Naive thymus-derived CD8-positive, alpha-beta T cell (primary cell): ENCODE measurements at regions of chr19 and their contacts with region 1.

Region 1: DNA sequence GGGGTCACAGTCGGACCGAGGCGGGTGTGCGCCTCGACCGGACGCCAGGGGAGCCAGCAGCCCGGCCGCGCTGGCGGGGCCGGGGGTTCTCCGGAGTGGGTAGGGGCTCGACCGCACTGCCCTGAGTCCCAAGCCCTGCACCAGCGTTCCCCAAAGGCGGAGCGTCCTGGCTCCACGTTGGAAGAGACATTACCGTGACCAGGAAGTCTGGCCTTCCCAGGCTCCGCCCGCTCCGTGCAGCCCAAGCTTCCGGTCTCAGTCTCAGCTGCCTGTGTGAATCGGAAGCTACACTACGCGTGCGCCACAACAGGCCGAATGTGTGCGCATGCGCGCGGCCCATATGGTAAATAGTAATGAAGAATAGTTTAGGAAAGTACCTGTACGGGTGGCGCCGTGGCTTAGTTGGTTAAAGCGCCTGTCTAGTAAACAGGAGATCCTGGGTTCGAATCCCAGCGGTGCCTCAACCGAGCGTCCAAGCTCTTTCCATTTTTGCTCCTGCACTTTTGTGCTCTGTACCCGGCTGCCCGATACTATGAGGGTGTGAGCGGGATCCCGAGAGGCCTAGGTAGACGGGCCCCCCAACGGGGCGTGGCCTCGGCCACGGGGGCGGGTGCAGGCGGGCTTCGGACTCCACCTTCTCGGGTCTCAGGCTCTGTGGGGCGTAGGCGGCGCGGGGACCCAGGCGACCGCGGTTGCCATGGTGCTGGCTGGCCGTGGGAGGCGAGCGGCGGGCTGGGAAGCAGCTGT is 17.3 kb upstream of the LRP3 start:
- DNase-seq: peak; percentile 83 to 99 (median 96)
- ATAC-seq: peak; percentile 73 to 79
- H3K4me3 Mint-ChIP-seq: peak overlapping the region; percentile 92 to 100 (median 98)
- H3K27ac Mint-ChIP-seq: peak overlapping the region; percentile 97 to 100 (median 99)
- H3K4me1 Mint-ChIP-seq: peaks cover 24 to 55% (median 53%) of the 10 kb centered on the region in 4 donors
- H3K27me3 Mint-ChIP-seq: peaks cover 0 to 4% (median 0%) of the 10 kb centered on the region in 5 donors

Region 2: DNA sequence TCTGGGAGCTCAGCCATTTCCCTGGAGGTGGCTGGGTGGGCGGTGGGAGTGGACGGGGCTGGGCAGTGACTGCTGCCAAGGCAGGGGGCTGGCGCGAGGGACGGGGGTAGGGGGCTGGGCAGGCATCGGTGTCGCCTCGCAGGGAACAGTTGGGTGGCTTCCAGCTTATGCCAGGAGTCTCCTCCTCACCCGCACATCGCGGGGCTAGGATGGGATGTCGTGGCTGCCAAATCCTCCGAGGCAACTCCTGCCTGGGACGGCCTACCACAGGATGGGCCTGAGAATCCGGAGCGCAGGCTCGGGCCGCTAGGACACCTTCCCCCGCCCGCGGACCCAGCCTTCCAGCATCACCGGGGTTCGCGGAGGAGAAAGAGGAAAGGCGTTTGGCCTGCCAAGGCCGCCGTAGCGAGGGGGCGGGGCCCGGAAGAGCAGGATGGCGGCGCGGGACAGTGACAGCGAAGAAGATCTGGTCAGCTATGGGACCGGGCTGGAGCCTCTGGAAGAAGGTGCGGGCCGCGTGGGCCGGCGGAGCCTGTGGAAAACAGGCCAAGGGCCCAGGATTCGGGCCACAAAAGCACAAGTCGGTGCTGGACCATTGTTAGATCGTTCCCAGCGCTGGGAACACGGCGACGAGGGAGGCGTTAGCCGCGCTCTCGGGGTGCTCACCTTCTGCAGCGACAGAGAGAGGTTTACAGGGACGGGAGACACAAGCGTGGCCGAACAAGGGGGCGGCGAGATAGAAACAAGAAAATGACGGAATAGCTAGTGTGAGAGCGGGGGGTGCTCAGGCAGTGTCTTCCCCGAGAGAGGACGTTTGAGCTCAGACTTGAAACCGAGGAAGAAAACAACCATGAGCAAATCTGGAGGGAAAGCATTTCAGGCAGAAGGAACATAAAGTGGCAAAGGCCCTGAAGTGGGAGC is 95.8 kb before region 1 on chr19 and contains the start of gene GPATCH1:
- POLR2A ChIA-PET with region 1: interaction called, 10 read pairs
- DNase-seq: peak; percentile 70 to 92 (median 82)
- ATAC-seq: peak; percentile 95 to 97
- H3K4me3 Mint-ChIP-seq: peak within 1 kb of the TSS; percentile 93 to 100 (median 99)
- H3K27ac Mint-ChIP-seq: peak within 1 kb of the TSS; percentile 91 to 99 (median 97)
- H3K4me1 Mint-ChIP-seq: peaks cover 13 to 34% (median 21%) of the 10 kb centered on the region in 4 donors
- H3K27me3 Mint-ChIP-seq: no peaks in the 10 kb centered on the region
- polyA plus RNA-seq, gene GPATCH1: 3.9 to 6.4 (median 5.0) TPM

Region 3: DNA sequence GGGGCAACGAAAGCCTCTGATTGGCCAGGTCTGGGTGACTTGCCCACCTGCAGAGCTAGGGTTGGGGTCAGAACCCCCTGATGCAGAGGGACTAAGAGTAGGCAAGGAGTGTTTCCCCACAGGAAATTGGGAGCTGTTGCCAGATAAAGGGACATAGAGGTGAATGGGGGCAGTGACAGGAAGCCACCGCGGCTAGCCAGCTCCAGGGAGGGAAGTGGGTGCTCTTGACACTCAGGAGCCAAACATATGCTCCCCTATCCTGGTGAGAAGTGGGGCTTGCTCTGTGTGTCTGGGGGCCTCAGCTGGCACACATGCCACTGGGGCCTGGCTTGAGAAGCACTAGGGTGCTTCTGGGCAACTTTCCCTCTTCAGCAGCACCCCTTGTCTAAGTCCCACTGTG is 18.9 kb before region 1 on chr19:
- POLR2A ChIA-PET with region 1: interaction called, 113 read pairs
- DNase-seq: no peak
- ATAC-seq: no peak
- H3K4me3 Mint-ChIP-seq: peak overlapping the region in 1 of 10 donors; percentile 22
- H3K27ac Mint-ChIP-seq: peak overlapping the region in 7 of 10 donors; percentile 28 to 92 (median 69)
- H3K4me1 Mint-ChIP-seq: peaks cover 18 to 43% (median 37%) of the 10 kb centered on the region in 4 donors
- H3K27me3 Mint-ChIP-seq: no peaks in the 10 kb centered on the region

Region 4: GRCh38 chr19:33373701-33374421 is 197.0 kb after region 1 on chr19 and contains the start of gene CEBPG:
- POLR2A ChIA-PET with region 1: interaction called, 27 read pairs
- DNase-seq: peak in 6 of 10 donors; percentile 28 to 64 (median 51)
- ATAC-seq: peak; percentile 48
- H3K4me3 Mint-ChIP-seq: peak within 1 kb of the TSS; percentile 84 to 98 (median 90)
- H3K27ac Mint-ChIP-seq: peak within 1 kb of the TSS; percentile 76 to 95 (median 89)
- H3K4me1 Mint-ChIP-seq: peaks cover 22 to 54% (median 47%) of the 10 kb centered on the region in 4 donors
- H3K27me3 Mint-ChIP-seq: no peaks in the 10 kb centered on the region
- polyA plus RNA-seq, gene CEBPG: 4.5 to 9.3 (median 4.8) TPM